ENCODE measurements at regions of chr1 and their contacts with region 1.

Region 1: DNA sequence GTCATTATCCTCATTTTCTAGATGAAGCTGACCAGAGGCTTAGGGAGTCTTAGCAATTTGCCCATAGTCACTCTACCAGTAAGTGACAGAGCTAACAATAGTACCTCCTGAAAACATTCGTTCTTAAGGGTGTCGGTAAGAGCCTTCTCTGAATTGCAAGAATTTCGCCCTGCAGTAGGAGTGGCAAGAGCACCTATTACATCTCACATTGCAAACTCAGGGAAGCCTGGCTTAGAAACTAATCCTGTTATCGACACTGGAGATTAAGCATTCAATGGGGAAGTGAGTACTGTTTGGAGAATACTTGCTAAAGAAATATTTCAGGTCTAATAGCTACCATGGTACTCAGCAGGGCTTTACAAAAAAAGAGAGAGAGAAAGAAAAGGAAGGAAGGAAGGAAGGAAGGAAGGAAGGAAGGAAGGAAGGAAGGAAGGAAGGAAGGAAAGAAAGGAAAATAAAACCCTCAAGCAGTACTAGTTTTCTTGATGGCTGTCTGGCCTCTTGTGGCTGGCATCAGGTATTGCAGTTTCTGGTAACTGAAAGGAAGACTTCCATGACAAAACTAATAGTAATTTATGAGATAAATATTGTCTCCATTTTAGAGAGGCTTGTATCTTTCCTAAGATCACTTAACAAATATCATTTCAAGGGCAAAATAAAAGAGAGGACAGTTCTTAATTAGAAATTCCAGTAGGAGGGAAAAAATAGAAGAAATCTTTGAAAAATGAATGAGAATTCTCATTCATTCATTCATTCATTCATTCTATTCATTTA is 10.4 kb downstream of the C1orf226 start:
- DNase-seq: peak; percentile 72
- H3K4me3 Mint-ChIP-seq: no peak overlapping the region
- H3K27ac Mint-ChIP-seq: no peak overlapping the region
- H3K4me1 Mint-ChIP-seq: peaks cover 37% of the 10 kb centered on the region
- H3K27me3 Mint-ChIP-seq: peaks cover 13% of the 10 kb centered on the region
- CTCF ChIP-seq: peak; percentile 93

Region 2: GRCh38 chr1:162141273-162142023 is 250.5 kb before region 1 on chr1:
- CTCF ChIA-PET with region 1: interaction called, 7 read pairs
- POLR2A ChIA-PET with region 1: interaction called, 4 read pairs
- intact Hi-C with region 1: loop called (anchors 5 kb)
- DNase-seq: peak; percentile 62
- H3K4me3 Mint-ChIP-seq: no peak overlapping the region
- H3K27ac Mint-ChIP-seq: peak overlapping the region; percentile 68
- H3K4me1 Mint-ChIP-seq: peaks cover 27% of the 10 kb centered on the region
- H3K27me3 Mint-ChIP-seq: no peaks in the 10 kb centered on the region
- CTCF ChIP-seq: no peak

Region 3: DNA sequence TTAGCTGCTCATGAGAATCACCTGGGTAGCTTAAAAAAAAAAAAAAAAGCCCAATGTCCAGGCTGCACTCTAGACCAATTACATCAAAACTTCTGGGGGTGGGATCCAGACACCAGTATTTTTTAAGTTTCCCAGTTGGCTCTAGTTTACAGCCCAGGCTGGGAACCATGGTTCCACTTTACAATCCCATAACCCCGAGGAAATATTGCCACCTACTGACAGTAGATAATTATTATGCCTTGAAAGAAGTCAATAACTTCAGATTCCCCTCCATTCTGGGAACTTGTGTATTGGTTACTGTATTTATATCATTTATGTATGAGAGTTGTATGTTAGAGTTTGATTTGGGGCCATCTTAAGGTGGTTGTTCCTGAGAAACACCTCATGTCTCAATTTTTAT is 115.5 kb before region 1 on chr1:
- CTCF ChIA-PET with region 1: interaction called, 93 read pairs
- POLR2A ChIA-PET with region 1: interaction called, 3 read pairs
- intact Hi-C with region 1: loop called (anchors 1 kb)
- DNase-seq: peak; percentile 66
- H3K4me3 Mint-ChIP-seq: no peak overlapping the region
- H3K27ac Mint-ChIP-seq: no peak overlapping the region
- H3K4me1 Mint-ChIP-seq: peaks cover 7% of the 10 kb centered on the region
- H3K27me3 Mint-ChIP-seq: no peaks in the 10 kb centered on the region
- CTCF ChIP-seq: peak; percentile 64

Region 4: GRCh38 chr1:162300057-162300917 is 91.7 kb before region 1 on chr1:
- CTCF ChIA-PET with region 1: interaction called, 21 read pairs
- POLR2A ChIA-PET with region 1: no interaction called
- intact Hi-C with region 1: no loop called
- DNase-seq: no peak
- H3K4me3 Mint-ChIP-seq: no peak overlapping the region
- H3K27ac Mint-ChIP-seq: no peak overlapping the region
- H3K4me1 Mint-ChIP-seq: peaks cover 20% of the 10 kb centered on the region
- H3K27me3 Mint-ChIP-seq: no peaks in the 10 kb centered on the region
- CTCF ChIP-seq: no peak

Region 5: GRCh38 chr1:162367073-162367472 is 24.9 kb before region 1 on chr1:
- CTCF ChIA-PET with region 1: interaction called, 45 read pairs
- POLR2A ChIA-PET with region 1: interaction called, 23 read pairs
- intact Hi-C with region 1: no loop called
- DNase-seq: no peak
- H3K4me3 Mint-ChIP-seq: no peak overlapping the region
- H3K27ac Mint-ChIP-seq: no peak overlapping the region
- H3K4me1 Mint-ChIP-seq: peaks cover 27% of the 10 kb centered on the region
- H3K27me3 Mint-ChIP-seq: no peaks in the 10 kb centered on the region
- CTCF ChIP-seq: no peak

Region 6: DNA sequence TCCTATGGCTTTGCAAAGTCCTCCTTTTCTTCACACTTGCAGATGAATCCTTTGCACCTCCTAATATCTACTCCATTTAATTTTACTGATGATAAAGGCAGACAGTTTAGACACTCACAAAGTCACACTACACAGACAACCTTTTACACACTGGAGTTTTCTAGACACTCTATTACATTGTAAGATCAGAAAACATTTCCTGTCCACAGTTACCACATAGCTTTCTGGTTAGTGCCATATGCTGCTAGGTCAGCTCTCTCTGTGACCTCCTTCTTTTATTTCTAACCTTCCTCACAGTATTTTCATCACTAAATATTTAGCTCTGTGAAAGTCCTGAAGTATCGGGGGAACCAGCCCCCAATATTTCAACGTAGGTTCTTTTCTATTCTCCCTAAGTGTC is 14.8 kb after region 1 on chr1:
- CTCF ChIA-PET with region 1: interaction called, 20 read pairs
- POLR2A ChIA-PET with region 1: interaction called, 3 read pairs
- intact Hi-C with region 1: no loop called
- DNase-seq: no peak
- H3K4me3 Mint-ChIP-seq: no peak overlapping the region
- H3K27ac Mint-ChIP-seq: no peak overlapping the region
- H3K4me1 Mint-ChIP-seq: peaks cover 16% of the 10 kb centered on the region
- H3K27me3 Mint-ChIP-seq: no peaks in the 10 kb centered on the region
- CTCF ChIP-seq: no peak

Region 7: DNA sequence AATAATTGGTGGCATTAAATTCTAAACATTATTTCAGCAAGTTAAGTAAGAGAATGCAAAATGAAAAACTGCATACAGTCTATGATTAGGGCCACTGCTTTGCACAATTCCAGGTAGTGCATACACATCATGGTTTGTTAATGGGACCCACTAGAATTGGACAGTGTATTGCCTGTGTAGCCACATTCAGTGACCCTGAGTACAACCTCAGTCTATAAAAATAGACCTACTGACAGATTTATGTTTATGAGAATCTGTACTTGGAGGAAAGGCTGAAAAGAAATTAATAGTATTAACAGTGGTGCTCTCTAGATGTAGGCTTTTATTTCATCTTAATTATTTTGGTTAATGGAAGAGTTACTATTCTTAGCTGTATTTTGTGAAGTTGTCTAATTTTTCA is 188.3 kb after region 1 on chr1:
- CTCF ChIA-PET with region 1: no interaction called
- POLR2A ChIA-PET with region 1: no interaction called
- intact Hi-C with region 1: no loop called
- DNase-seq: no peak
- H3K4me3 Mint-ChIP-seq: no peak overlapping the region
- H3K27ac Mint-ChIP-seq: no peak overlapping the region
- H3K4me1 Mint-ChIP-seq: peaks cover 17% of the 10 kb centered on the region
- H3K27me3 Mint-ChIP-seq: no peaks in the 10 kb centered on the region
- CTCF ChIP-seq: no peak

Measured in MCF 10A (cell line).